Tibial artery (tissue), 4 donors: ENCODE measurements at regions of chr16 and their contacts with region 1.

Region 1: DNA sequence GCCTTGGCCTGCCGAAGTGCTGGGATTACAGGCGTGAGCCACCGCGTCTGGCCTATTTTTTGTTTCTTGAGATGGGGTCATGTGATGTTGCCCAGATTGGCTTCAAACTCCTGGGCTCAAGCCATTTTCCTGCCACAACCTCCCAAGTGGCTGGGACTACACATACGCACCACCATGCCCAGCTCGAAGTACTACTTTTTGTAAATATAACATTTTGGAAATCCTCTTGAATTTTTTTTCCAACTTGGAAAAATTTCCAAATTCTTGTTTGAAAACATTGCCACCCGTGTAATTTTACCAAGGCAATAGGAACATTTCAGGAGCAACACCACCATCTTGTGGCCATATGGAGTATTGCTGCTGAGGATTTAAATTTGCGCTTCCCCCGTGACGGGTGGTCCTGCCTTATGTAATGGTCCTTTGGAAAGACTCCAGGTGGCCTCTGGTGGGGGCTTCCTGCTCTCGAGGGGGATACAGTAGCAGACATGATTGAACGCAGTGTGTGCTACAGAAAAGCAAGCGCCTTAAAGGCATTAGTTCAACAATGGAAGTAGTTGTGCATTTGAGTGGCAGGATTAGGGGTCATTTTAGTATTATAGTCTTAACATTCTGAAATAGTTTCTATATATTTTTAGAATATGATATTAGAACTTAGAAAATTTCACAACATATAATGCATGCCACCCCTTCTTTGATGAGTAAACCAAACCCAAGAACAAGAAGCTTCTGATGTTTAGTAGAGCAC is 8.0 kb downstream of the FLYWCH1 start:
- DNase-seq: peak; percentile 65 to 89
- H3K4me3 ChIP-seq: no peak overlapping the region
- H3K27ac ChIP-seq: peak overlapping the region; percentile 69 to 80
- H3K4me1 ChIP-seq: peaks cover 0 to 14% (median 4%) of the 10 kb centered on the region in 4 donors
- H3K27me3 ChIP-seq: no peaks in the 10 kb centered on the region
- CTCF ChIP-seq: peak; percentile 90 to 98

Region 2: GRCh38 chr16:2586241-2586640 is 333.4 kb before region 1 on chr16:
- intact Hi-C with region 1: no loop called
- DNase-seq: no peak
- H3K4me3 ChIP-seq: no peak overlapping the region
- H3K27ac ChIP-seq: no peak overlapping the region
- H3K4me1 ChIP-seq: peaks cover 0 to 16% (median 0%) of the 10 kb centered on the region in 4 donors
- H3K27me3 ChIP-seq: no peaks in the 10 kb centered on the region
- CTCF ChIP-seq: no peak

Region 3: GRCh38 chr16:2874912-2875362 is 44.7 kb before region 1 on chr16:
- intact Hi-C with region 1: loop called (anchors 2 kb)
- DNase-seq: peak; percentile 70 to 84
- H3K4me3 ChIP-seq: no peak overlapping the region
- H3K27ac ChIP-seq: no peak overlapping the region
- H3K4me1 ChIP-seq: peaks cover 0 to 7% (median 2%) of the 10 kb centered on the region in 4 donors
- H3K27me3 ChIP-seq: no peaks in the 10 kb centered on the region
- CTCF ChIP-seq: peak; percentile 93 to 97